Esophagus muscularis mucosa (tissue), 4 donors: ENCODE measurements at regions of chr16 and their contacts with region 1.

Region 1: GRCh38 chr16:30482366-30482765 is 9.8 kb downstream of the ITGAL start:
- DNase-seq: no peak
- H3K4me3 ChIP-seq: no peak overlapping the region
- H3K27ac ChIP-seq: no peak overlapping the region
- H3K4me1 ChIP-seq: peaks cover 0 to 4% (median 0%) of the 10 kb centered on the region in 4 donors
- H3K27me3 ChIP-seq: peaks cover 0 to under 1% (median 0%) of the 10 kb centered on the region in 4 donors
- CTCF ChIP-seq: no peak
- EP300 ChIP-seq: no peak
- POLR2A ChIP-seq: no peak

Region 2: GRCh38 chr16:30142672-30143346 is 339.6 kb before region 1 on chr16:
- intact Hi-C with region 1: loop called (anchors 10 kb)
- DNase-seq: no peak
- H3K4me3 ChIP-seq: no peak overlapping the region
- H3K27ac ChIP-seq: no peak overlapping the region
- H3K4me1 ChIP-seq: no peaks in the 10 kb centered on the region
- H3K27me3 ChIP-seq: no peaks in the 10 kb centered on the region
- CTCF ChIP-seq: no peak
- EP300 ChIP-seq: no peak
- POLR2A ChIP-seq: no peak

Region 3: GRCh38 chr16:30509081-30509765 is 26.9 kb after region 1 on chr16:
- intact Hi-C with region 1: no loop called
- DNase-seq: no peak
- H3K4me3 ChIP-seq: no peak overlapping the region
- H3K27ac ChIP-seq: no peak overlapping the region
- H3K4me1 ChIP-seq: no peaks in the 10 kb centered on the region
- H3K27me3 ChIP-seq: no peaks in the 10 kb centered on the region
- CTCF ChIP-seq: no peak
- EP300 ChIP-seq: no peak
- POLR2A ChIP-seq: no peak